GM12878 (cell line): ENCODE measurements at regions of chr15 and their contacts with region 1.

Region 1: GRCh38 chr15:75842722-75843551 is at the start of gene UBE2Q2:
- DNase-seq: no peak
- ATAC-seq: peak; percentile 78
- H3K4me3 ChIP-seq: peak within 1 kb of the TSS; percentile 93
- H3K27ac ChIP-seq: peak within 1 kb of the TSS; percentile 63
- H3K4me1 ChIP-seq: peaks cover 10% of the 10 kb centered on the region
- H3K27me3 ChIP-seq: no peaks in the 10 kb centered on the region
- CTCF ChIP-seq: no peak
- EP300 ChIP-seq: no peak
- POLR2A ChIP-seq: peak; percentile 81
- RAD21 ChIP-seq: no peak
- polyA plus RNA-seq, gene UBE2Q2: 11.1 to 13.0 TPM

Region 2: DNA sequence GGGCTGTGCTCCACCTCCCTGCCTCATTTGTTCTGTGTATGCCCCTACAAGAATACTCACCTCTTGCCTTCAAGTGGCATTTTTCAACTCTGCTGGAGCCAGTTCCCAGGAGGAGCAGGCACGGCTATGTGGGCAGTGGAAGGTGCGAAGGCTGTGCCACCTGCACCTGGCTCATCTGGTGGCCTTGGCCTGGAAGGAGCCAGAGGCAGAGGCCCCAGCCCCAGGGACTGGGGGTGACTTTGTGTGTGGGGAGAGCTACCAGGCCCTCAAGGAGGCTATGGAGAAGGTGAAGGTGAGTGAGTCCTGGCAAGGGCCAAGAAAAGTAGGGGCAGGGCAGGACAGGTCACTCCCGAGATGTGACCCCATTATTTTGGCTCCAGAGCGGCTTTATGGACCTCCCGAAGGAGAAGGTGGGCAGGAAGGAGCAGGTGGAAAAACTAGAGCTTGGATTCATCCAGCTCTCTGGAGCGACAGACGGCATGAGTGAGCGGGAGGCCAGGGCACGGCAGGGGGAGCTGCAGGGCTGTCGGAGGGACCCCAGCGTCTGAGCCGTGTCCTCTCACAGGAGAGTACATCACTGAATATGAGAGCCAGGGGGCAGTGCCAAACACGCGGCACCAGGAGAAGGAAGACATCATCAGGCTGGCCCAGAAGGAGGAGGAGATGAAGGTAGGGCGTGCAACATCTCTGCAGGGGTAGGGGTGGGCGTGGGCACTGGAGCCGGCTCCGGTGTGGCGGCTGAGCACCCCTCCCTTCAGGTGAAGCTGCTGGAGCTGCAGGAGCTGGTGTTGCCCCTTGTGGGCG is 57.0 kb before region 1 on chr15:
- CTCF ChIA-PET with region 1: no interaction called
- POLR2A ChIA-PET with region 1: no interaction called
- RAD21 ChIA-PET with region 1: no interaction called
- SMC1A ChIA-PET with region 1: no interaction called
- in situ Hi-C with region 1: no loop called
- intact Hi-C with region 1: no loop called
- DNase-seq: no peak
- ATAC-seq: no peak
- H3K4me3 ChIP-seq: no peak overlapping the region
- H3K27ac ChIP-seq: no peak overlapping the region
- H3K4me1 ChIP-seq: no peaks in the 10 kb centered on the region
- H3K27me3 ChIP-seq: no peaks in the 10 kb centered on the region; a peak in 2 of 4 replicates
- CTCF ChIP-seq: no peak
- EP300 ChIP-seq: no peak
- POLR2A ChIP-seq: no peak
- RAD21 ChIP-seq: no peak

Region 3: DNA sequence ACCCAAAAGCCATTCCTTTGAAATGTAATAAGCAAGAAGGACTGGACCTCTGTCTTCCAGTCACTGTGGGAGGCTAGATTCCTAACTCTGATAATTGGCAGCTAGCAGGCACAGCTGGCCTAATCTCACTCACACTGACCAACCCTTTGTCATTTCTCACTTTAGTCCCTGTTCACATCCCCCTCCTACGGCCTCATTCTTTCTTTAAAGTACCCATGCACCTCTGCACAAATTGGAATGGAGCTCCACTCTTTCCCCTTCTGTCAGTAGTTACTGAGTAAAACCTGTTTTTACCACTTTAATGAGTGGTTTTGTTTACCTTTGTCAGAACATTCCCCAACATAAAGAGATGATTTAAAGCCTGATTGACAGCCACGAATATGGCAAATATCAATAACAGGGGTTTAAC is 11.4 kb before region 1 on chr15:
- CTCF ChIA-PET with region 1: interaction called, 11 read pairs
- POLR2A ChIA-PET with region 1: interaction called, 3 read pairs
- RAD21 ChIA-PET with region 1: interaction called, 4 read pairs
- SMC1A ChIA-PET with region 1: interaction called, 5 read pairs
- in situ Hi-C with region 1: no loop called
- intact Hi-C with region 1: no loop called
- DNase-seq: no peak
- ATAC-seq: no peak
- H3K4me3 ChIP-seq: no peak overlapping the region
- H3K27ac ChIP-seq: no peak overlapping the region
- H3K4me1 ChIP-seq: peaks cover 1% of the 10 kb centered on the region; the same call in 1 of the 2 replicates
- H3K27me3 ChIP-seq: no peaks in the 10 kb centered on the region
- CTCF ChIP-seq: no peak
- EP300 ChIP-seq: no peak
- POLR2A ChIP-seq: no peak
- RAD21 ChIP-seq: no peak

Region 4: DNA sequence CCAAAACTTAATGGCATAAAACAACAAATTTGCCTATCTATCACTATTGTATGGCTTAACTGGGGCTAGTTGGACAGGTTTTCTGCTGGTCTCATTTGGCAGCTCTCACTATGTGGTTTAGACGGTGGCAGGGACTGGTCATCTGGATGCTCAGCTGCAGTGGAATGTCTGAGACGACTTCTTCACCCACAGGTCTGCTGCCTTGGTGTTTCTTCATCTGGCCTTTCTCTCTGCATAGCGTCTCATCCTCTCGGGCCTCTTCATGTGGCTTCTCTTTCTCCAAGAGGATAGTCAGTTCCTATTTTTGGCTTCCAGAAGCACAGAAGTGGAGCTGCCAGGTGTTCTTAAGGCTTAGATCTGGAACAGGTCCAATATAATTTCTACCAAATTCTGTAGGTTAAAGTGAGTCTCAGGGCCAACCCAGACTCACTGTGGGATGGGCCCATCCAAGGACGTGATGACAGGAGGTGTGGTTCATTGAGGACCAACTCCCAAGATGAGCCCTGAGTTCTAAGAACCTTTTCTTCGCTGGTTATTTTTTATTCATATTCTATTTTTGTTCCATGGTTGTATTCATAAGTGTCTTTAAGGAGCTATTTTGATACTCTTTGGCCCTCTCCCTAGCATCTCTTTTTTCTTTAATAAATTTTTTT is 18.9 kb after region 1 on chr15:
- CTCF ChIA-PET with region 1: interaction called, 5 read pairs
- POLR2A ChIA-PET with region 1: interaction called, 10 read pairs
- RAD21 ChIA-PET with region 1: interaction called, 4 read pairs
- SMC1A ChIA-PET with region 1: interaction called, 13 read pairs
- in situ Hi-C with region 1: no loop called
- intact Hi-C with region 1: no loop called
- DNase-seq: no peak
- ATAC-seq: no peak
- H3K4me3 ChIP-seq: no peak overlapping the region
- H3K27ac ChIP-seq: no peak overlapping the region
- H3K4me1 ChIP-seq: peaks cover 2% of the 10 kb centered on the region; the same call in 1 of the 2 replicates
- H3K27me3 ChIP-seq: no peaks in the 10 kb centered on the region
- CTCF ChIP-seq: no peak
- EP300 ChIP-seq: no peak
- POLR2A ChIP-seq: no peak
- RAD21 ChIP-seq: no peak

Region 5: GRCh38 chr15:75867449-75867848 is 24.5 kb after region 1 on chr15:
- CTCF ChIA-PET with region 1: interaction called, 5 read pairs
- POLR2A ChIA-PET with region 1: interaction called, 10 read pairs
- RAD21 ChIA-PET with region 1: interaction called, 4 read pairs
- SMC1A ChIA-PET with region 1: interaction called, 13 read pairs
- in situ Hi-C with region 1: no loop called
- intact Hi-C with region 1: no loop called
- DNase-seq: no peak
- ATAC-seq: peak; percentile 77
- H3K4me3 ChIP-seq: peak overlapping the region; percentile 19; the same call in 1 of the 2 replicates
- H3K27ac ChIP-seq: no peak overlapping the region
- H3K4me1 ChIP-seq: peaks cover 12% of the 10 kb centered on the region; the same call in 1 of the 2 replicates
- H3K27me3 ChIP-seq: no peaks in the 10 kb centered on the region
- CTCF ChIP-seq: no peak
- EP300 ChIP-seq: no peak
- POLR2A ChIP-seq: no peak
- RAD21 ChIP-seq: no peak

Region 6: DNA sequence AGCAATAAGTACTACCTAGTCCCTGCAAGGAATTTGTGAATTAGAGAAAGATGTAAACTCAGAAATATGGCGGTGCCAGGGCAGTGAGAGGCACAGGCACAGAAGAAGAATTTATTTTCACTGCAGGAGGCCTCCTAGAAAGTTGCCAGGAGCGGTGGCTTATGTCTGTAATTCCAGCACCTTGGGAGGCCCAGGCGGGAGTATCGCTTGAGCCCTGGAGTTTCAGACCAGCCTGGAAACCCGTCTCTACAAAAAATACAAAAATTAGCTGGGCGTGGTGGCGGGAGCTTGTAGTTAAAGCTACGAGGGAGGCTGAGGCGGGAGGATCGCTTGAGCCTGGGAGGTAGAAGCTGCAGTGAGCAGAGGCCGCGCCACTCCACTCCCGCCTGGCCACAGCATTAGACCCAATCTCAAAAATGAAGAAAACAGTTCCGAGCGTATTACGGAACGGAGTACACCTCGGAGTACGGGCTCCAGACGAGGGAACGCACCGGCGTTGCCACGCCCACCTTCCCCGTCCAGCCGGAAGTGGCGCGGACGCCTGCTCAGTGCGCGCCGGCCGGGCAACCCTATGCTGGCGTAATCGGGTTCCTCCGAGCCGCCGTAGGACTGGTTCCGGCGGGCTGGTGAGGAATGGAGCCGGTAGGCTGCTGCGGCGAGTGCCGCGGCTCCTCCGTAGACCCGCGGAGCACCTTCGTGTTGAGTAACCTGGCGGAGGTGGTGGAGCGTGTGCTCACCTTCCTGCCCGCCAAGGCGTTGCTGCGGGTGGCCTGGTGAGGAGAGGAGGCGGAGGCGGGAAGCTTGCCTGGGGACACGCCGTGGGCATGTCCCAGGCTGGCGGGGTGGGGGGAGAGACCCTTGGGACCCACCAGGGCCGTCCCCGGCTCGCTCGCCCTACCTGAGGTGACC is 60.6 kb after region 1 on chr15 and contains the start of gene FBXO22:
- CTCF ChIA-PET with region 1: interaction called, 4 read pairs
- POLR2A ChIA-PET with region 1: interaction called, 4 read pairs
- RAD21 ChIA-PET with region 1: interaction called, 4 read pairs
- SMC1A ChIA-PET with region 1: interaction called, 3 read pairs
- in situ Hi-C with region 1: no loop called
- intact Hi-C with region 1: loop called (anchors 5 kb)
- DNase-seq: peak; percentile 68
- ATAC-seq: peak; percentile 98
- H3K4me3 ChIP-seq: peak within 1 kb of the TSS; percentile 90
- H3K27ac ChIP-seq: peak within 1 kb of the TSS; percentile 89
- H3K4me1 ChIP-seq: no peaks in the 10 kb centered on the region
- H3K27me3 ChIP-seq: no peaks in the 10 kb centered on the region
- CTCF ChIP-seq: no peak
- EP300 ChIP-seq: no peak
- POLR2A ChIP-seq: peak; percentile 92
- RAD21 ChIP-seq: no peak
- polyA plus RNA-seq, gene FBXO22: 15.2 to 19.1 TPM